Posterior cingulate gyrus (tissue), 11 donors: ENCODE measurements at regions of chr7 and their contacts with region 1.

Region 1: GRCh38 chr7:85023045-85023712 is 163.7 kb downstream of the SEMA3D start:
- DNase-seq: peak in 1 of 10 donors; percentile 16

Region 2: DNA sequence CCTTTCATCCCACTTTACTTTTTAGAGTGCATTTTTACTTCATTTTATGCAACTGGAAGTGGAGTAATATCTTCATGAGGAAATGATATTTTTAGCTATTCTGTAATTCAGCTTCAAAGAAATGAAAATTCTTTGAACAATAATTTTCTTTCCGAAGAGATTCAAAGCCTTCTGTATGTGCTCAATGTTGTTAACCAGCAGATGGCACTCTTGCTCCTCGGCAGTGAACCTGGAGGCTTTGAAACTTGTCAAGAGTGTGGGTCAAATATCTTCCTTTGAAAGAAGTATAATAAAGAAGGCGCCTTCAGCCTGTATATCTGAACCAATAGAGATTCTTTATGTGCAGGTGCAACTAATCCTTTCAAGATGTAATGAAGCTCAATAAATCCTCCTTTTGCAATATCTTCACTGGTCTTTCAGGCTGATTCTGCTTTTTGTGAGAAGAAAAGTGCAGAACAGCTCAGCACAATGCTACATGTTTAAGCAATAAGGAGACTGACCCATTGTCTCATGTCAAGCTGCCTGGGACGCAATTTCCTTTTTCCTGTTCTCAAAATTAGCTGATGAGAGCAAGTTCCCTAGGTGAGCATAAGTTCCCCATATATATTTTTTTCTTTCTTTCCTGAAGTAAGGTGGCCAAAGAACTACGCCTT is 1087.0 kb before region 1 on chr7:
- intact Hi-C with region 1: loop called (anchors 2 kb)
- DNase-seq: peak in 9 of 10 donors; percentile 37 to 94 (median 69)

Region 3: DNA sequence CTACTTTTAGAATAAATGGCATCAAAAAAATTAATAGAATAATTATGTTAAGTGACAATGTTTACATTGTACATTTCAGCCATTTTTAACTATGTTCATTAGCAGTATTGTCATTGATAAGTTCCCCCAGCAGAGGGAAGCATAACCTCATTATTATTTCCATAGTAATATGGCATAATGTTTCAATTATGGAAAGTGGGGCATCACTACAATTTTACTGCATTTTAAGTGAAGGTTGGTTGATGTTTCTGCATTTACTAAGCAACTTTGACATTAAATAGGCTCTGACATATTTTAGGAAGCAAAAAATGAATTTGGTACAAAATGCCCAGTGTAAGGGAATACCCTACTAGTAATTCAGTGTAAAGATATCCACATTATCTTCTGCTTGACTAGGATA is 1046.9 kb before region 1 on chr7:
- intact Hi-C with region 1: loop called (anchors 1 kb)
- DNase-seq: no peak

Region 4: DNA sequence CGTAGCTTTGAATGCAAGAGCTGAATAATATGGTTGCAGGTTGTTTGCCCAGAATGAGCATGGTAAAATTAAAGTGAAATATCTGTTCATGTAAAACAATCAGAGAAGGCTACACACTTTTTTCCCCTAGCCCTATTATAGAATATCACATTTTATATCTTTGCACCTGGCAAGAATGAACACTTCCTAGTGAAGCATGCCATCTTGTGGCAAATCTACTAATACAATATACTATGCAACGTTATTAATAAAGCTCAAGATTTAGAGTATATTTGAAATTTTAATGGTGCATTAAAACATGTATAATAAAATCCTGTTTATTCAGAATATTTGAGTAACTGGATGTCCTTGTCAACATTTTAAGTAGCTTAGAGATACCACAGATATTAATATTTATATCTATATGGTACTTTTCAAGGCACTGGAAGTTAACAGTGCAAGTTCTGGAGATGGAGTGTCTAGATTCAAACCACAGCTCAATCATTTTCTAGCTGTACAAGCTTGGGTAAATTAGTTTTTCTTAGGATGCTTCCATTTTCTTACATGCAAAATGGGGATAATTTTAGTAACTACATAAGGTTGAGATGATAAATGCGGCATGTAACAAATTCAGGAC is 806.7 kb after region 1 on chr7:
- intact Hi-C with region 1: loop called (anchors 5 kb)
- DNase-seq: no peak